Stomach (tissue), 19 donors: ENCODE measurements at regions of chr10 and their contacts with region 1.

Region 1: DNA sequence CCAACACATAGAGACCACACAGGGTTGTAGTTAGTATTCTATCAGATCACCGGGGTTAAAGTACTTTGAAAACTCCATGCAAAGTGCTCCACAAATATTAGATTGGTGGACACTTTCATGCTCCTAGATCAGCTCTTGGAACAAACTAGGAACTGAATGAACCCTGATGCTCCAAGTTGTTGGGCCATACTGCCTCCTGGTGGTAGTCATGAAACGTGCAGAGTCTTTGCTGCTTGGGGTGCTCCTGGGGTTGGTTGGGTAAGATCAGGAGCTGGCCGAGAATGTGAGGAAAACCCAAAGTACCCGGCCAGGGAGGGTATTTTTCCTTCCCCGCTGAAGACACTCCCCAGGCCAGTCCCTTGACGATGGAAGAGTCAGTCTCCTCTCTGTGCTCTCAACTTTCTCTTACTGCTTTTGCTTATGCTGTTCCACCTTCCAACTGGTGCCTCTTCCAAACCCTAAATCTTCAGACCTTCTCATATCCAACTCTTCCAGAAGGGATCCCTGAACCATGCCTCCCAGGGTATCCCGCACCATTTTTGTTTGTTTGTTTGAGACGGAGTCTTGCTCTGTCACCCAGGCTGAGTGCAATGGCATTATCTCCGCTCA is 920 bp upstream of the RPEL1 start:
- DNase-seq: peak; percentile 81 to 93
- H3K4me3 ChIP-seq: no peak overlapping the region
- H3K27ac ChIP-seq: no peak overlapping the region
- H3K4me1 ChIP-seq: peaks cover 17 to 36% (median 28%) of the 10 kb centered on the region in 4 donors
- H3K27me3 ChIP-seq: no peaks in the 10 kb centered on the region
- CTCF ChIP-seq: peak in 5 of 7 experiments; percentile 77 to 89 (median 87)
- EP300 ChIP-seq: no peak
- POLR2A ChIP-seq: no peak

Region 2: GRCh38 chr10:102917962-102918816 is 326.6 kb before region 1 on chr10 and contains the start of gene CNNM2:
- intact Hi-C with region 1: loop called (anchors 2 kb)
- DNase-seq: peak; percentile 100
- H3K4me3 ChIP-seq: peak within 1 kb of the TSS; percentile 79 to 98 (median 88)
- H3K27ac ChIP-seq: peak within 1 kb of the TSS; percentile 82 to 96 (median 92)
- H3K4me1 ChIP-seq: peaks cover 28 to 58% (median 48%) of the 10 kb centered on the region in 4 donors
- H3K27me3 ChIP-seq: no peaks in the 10 kb centered on the region
- CTCF ChIP-seq: peak in 1 of 7 experiments; percentile 4
- EP300 ChIP-seq: no peak
- POLR2A ChIP-seq: no peak
- total RNA-seq, gene CNNM2: 5.3 to 45.5 (median 15.2) TPM

Region 3: DNA sequence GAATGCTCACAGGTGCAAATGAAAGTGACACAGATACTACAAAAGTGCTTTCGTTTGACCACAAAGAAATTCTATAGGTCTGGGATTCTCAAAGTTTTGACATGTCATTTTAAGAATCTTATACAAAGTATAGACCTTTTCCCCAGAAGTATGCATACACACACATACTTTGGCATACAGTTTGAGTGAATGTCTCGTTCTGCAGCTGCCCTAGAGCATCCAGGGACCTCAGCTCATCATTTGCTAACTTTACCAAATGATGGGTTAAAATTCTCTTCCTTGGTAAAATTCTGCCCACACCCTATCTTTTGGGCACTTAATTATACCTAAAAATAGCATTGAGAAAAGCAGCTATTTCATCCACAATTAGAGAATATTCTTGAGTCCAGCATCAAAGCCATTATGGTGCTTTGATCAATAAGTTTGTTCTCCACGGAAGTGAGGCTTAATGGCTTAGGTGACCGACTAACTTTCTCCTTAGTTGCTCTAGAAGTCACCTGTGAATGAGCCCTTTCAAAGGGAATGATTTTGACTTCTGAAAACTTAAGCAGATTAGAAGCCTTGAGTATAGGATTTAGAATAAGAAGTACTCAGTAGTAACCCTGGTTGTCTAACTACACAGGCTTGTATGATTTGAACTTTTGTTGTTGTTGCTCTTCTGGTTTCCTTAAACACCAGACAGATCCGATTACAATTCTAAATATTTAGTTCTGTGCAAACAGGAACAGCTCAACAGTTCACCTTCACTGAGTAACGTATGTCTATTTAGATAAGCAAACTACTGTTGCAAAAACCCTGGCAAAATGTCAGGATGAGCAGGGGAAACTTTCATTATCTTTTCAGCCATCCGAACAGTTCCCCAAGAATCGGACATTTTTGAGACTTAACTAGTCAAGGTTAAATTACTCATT is 256.1 kb before region 1 on chr10:
- intact Hi-C with region 1: no loop called
- DNase-seq: peak in 1 of 2 donors; percentile 21
- H3K4me3 ChIP-seq: no peak overlapping the region
- H3K27ac ChIP-seq: no peak overlapping the region
- H3K4me1 ChIP-seq: peaks cover 0 to 15% (median 4%) of the 10 kb centered on the region in 4 donors
- H3K27me3 ChIP-seq: no peaks in the 10 kb centered on the region
- CTCF ChIP-seq: no peak
- EP300 ChIP-seq: no peak
- POLR2A ChIP-seq: no peak

Region 4: DNA sequence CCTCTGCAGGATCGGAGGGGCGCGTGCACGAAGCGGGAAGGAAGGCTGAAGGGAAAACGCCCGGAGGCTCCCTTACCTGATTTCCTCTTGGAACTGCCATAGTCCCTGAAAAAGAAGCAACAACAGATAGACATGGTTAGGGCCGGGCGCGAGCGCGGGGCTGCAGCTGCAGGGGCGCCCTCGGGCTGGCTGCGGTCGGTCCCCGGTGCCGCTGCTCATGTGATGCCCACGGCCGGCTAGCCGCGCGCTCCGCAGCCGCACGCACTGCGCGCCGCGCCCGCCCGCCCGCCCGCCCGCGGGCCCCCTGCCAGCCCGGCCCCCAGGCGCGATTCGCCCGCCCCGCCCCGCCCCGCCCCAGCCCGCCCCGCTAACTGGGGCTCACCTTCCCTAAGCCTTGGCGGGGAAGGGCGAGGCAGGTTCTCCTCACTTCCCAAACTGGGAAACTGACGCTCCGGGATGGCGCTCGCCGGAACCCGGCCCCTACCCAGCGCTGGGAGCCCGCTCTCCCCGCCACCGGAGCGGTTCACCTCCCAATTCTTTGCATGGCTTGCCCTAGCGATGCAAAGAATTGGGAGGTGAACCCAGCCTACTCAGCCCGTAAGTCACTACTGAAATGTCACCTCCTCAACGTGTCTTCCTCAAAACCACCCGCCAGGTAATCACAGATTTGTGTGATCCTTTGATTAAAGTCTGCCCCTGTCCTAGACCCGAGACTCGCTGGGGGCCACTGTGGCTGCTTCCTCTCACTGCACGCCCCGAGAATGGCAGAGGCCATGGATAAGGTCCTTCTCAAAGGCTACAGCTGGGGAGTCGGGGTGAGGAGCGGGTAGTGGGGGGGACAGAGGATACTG is 448.4 kb after region 1 on chr10:
- intact Hi-C with region 1: no loop called
- DNase-seq: peak in 1 of 2 donors; percentile 77
- H3K4me3 ChIP-seq: peak overlapping the region; percentile 34 to 48 (median 41)
- H3K27ac ChIP-seq: peak overlapping the region in 2 of 5 donors; percentile 42
- H3K4me1 ChIP-seq: peaks cover 28 to 60% (median 36%) of the 10 kb centered on the region in 4 donors
- H3K27me3 ChIP-seq: peaks cover 0 to 32% (median 0%) of the 10 kb centered on the region in 3 donors
- CTCF ChIP-seq: no peak
- EP300 ChIP-seq: no peak
- POLR2A ChIP-seq: no peak